K562 (cell line): ENCODE measurements at regions of chr21 and their contacts with region 1.

Region 1: GRCh38 chr21:39388038-39388810 is 39.3 kb upstream of the HMGN1 start:
- DNase-seq: peak; percentile 93 to 96 (median 94)
- ATAC-seq: peak; percentile 96
- H3K4me3 ChIP-seq: peak overlapping the region; percentile 45
- H3K27ac ChIP-seq: peak overlapping the region; percentile 72
- H3K4me1 ChIP-seq: peaks cover 13 to 34% of the 10 kb centered on the region in 2 experiments
- H3K27me3 ChIP-seq: no peaks in the 10 kb centered on the region
- CTCF ChIP-seq: peak; percentile 97 to 98 (median 97)
- EP300 ChIP-seq: 0 out of 2 replicates have a peak, but pooled peaks have one; percentile 16
- POLR2A ChIP-seq: peak; percentile 9
- RAD21 ChIP-seq: peak; percentile 98

Region 2: GRCh38 chr21:39183237-39184007 is 204.8 kb before region 1 on chr21 and contains the start of gene PSMG1:
- CTCF ChIA-PET with region 1: no interaction called
- POLR2A ChIA-PET with region 1: interaction called, 6 read pairs
- in situ Hi-C with region 1: no loop called
- intact Hi-C with region 1: loop called (anchors 5 kb)
- DNase-seq: peak; percentile 95 to 99 (median 96)
- ATAC-seq: peak; percentile 92
- H3K4me3 ChIP-seq: peak within 1 kb of the TSS; percentile 82
- H3K27ac ChIP-seq: peak within 1 kb of the TSS; percentile 93
- H3K4me1 ChIP-seq: peaks cover 8 to 11% of the 10 kb centered on the region in 2 experiments; a peak in 4 of 5 replicates
- H3K27me3 ChIP-seq: no peaks in the 10 kb centered on the region
- CTCF ChIP-seq: no peak
- EP300 ChIP-seq: no peak
- POLR2A ChIP-seq: peak; percentile 97
- RAD21 ChIP-seq: no peak
- polyA plus RNA-seq, gene PSMG1: 54.5 to 88.1 TPM

Region 3: GRCh38 chr21:39349211-39350093 is 38.8 kb before region 1 on chr21:
- CTCF ChIA-PET with region 1: interaction called, 5 read pairs
- POLR2A ChIA-PET with region 1: interaction called, 8 read pairs
- in situ Hi-C with region 1: no loop called
- intact Hi-C with region 1: loop called (anchors 1 kb)
- DNase-seq: peak; percentile 99 to 100 (median 100)
- ATAC-seq: peak; percentile 93
- H3K4me3 ChIP-seq: peak overlapping the region; percentile 68
- H3K27ac ChIP-seq: peak overlapping the region; percentile 94
- H3K4me1 ChIP-seq: peaks cover 5 to 30% of the 10 kb centered on the region in 2 experiments
- H3K27me3 ChIP-seq: no peaks in the 10 kb centered on the region
- CTCF ChIP-seq: no peak; a peak in 1 of 6 replicates
- EP300 ChIP-seq: no peak
- POLR2A ChIP-seq: peak; percentile 97
- RAD21 ChIP-seq: peak; percentile 13 to 19; a peak in 3 of 4 replicates

Region 4: GRCh38 chr21:39373644-39374043 is 14.6 kb before region 1 on chr21:
- CTCF ChIA-PET with region 1: interaction called, 3 read pairs
- POLR2A ChIA-PET with region 1: interaction called, 15 read pairs
- in situ Hi-C with region 1: no loop called
- intact Hi-C with region 1: loop called (anchors 2 kb)
- DNase-seq: peak in 2 of 4 experiments; percentile 29 to 68
- ATAC-seq: peak; percentile 66
- H3K4me3 ChIP-seq: no peak overlapping the region
- H3K27ac ChIP-seq: no peak overlapping the region
- H3K4me1 ChIP-seq: peaks cover 18 to 28% of the 10 kb centered on the region in 2 experiments
- H3K27me3 ChIP-seq: no peaks in the 10 kb centered on the region
- CTCF ChIP-seq: peak; percentile 40 to 67 (median 67); a peak in 5 of 6 replicates
- EP300 ChIP-seq: no peak
- POLR2A ChIP-seq: no peak
- RAD21 ChIP-seq: peak; percentile 39 to 69; a peak in 3 of 4 replicates

Region 5: GRCh38 chr21:39430457-39430856 is 42.2 kb after region 1 on chr21:
- CTCF ChIA-PET with region 1: no interaction called
- POLR2A ChIA-PET with region 1: interaction called, 3 read pairs
- in situ Hi-C with region 1: loop called (anchors 5 kb)
- intact Hi-C with region 1: no loop called
- DNase-seq: peak; percentile 54 to 96 (median 74)
- ATAC-seq: peak; percentile 93
- H3K4me3 ChIP-seq: no peak overlapping the region
- H3K27ac ChIP-seq: peak overlapping the region; percentile 74
- H3K4me1 ChIP-seq: peaks cover 5 to 16% of the 10 kb centered on the region in 2 experiments; a peak in 4 of 5 replicates
- H3K27me3 ChIP-seq: no peaks in the 10 kb centered on the region
- CTCF ChIP-seq: no peak
- EP300 ChIP-seq: peak; percentile 77; the same call in 1 of the 2 replicates
- POLR2A ChIP-seq: no peak
- RAD21 ChIP-seq: no peak